T-cell (primary cell): ENCODE measurements at regions of chr5 and their contacts with region 1.

Region 1: GRCh38 chr5:154466671-154467070 is 11.4 kb downstream of the HAND1 start:
- DNase-seq: no peak
- ATAC-seq: no peak
- H3K4me3 ChIP-seq: no peak overlapping the region
- H3K4me3 Mint-ChIP-seq: no peak overlapping the region
- H3K27ac ChIP-seq: no peak overlapping the region
- H3K27ac Mint-ChIP-seq: no peak overlapping the region
- H3K4me1 ChIP-seq: no peaks in the 10 kb centered on the region
- H3K4me1 Mint-ChIP-seq: peaks cover 4 to 7% (median 5%) of the 10 kb centered on the region in 3 donors
- H3K27me3 ChIP-seq: peaks cover 9 to 29% of the 10 kb centered on the region in 2 experiments
- H3K27me3 Mint-ChIP-seq: peaks cover 28 to 31% of the 10 kb centered on the region in 2 donors

Region 2: DNA sequence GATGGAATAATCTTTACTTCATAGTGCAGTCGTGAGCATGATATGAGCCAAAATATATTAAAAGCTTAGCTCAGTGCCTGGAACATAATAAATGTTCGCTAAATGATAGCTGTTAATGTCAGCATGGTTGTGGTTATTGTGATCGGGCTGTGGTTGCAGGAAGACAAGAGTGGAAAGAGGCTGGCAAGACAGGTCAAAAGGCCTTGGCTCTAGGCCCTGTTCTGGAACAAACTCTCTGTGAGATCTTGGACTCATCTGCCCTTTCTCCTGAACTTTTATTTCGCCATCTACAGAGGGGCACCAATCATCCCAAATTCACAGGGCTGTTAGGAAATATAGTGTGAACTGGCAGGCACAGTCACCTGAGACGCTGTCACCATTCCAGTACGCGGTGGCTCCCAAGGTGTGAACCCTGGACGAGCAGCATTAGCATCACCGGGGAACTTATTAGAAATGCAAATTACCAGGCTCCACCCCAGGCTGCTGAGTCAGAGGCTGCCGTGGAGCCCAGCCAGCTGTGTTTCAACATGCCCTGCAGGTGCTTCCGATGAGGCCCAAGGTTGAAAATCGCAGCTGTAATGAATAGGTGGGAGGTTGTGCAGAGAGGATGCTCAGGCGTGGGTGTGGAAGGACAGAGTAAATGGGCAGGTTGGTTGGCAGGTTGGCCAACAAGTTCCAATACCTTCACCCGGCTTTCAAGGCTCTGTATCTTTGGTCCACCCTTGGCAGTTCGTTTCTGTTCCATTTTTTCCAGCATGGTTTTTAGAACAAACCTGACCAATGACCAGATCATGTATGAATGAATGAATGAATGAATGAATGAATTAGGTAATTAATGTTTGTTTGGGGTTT is 71.0 kb before region 1 on chr5:
- CTCF ChIA-PET with region 1: no interaction called
- POLR2A ChIA-PET with region 1: no interaction called
- DNase-seq: no peak
- ATAC-seq: no peak
- H3K4me3 ChIP-seq: no peak overlapping the region
- H3K4me3 Mint-ChIP-seq: no peak overlapping the region
- H3K27ac ChIP-seq: no peak overlapping the region
- H3K27ac Mint-ChIP-seq: no peak overlapping the region
- H3K4me1 ChIP-seq: no peaks in the 10 kb centered on the region
- H3K4me1 Mint-ChIP-seq: no peaks in the 10 kb centered on the region
- H3K27me3 ChIP-seq: no peaks in the 10 kb centered on the region
- H3K27me3 Mint-ChIP-seq: no peaks in the 10 kb centered on the region

Region 3: DNA sequence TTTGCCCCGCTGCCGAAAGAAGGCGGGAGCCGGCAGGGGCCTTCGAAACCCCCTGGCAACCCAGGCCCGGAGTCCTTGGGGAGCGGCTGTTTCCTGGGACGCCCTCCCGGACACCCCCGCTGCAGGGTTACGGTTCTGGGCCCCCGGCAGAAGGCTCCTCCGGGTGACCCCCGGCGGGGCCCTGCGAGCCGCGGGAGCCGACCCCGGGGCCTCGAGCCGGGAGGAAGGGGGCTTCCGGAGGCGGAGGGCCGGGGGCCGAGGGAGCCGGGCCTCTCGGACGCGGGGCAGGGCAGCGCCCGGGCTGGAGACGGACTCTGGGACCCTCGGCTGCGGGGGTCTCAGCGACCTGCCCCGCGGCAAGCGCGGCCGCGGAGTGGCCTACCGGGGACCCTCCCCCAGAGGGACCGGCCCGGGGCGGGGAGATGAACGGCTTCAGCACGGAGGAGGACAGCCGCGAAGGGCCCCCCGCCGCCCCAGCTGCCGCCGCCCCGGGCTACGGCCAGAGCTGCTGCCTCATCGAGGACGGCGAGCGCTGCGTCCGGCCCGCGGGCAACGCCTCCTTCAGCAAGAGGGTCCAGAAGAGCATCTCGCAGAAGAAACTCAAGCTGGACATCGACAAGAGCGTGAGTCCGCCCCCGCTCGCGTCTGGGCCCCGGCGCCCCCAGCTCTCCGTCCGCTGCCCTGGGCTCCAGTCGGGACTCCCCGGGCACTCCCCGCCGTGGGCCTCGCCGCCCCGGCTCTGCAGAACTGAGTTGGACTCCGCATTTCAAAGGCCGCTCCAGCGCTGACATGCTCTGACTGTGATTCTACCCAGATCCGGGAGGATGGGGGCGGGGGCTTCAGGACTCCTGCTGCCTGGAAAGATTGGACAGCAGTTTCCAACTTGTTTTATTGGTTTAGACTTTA is 20.2 kb before region 1 on chr5:
- CTCF ChIA-PET with region 1: interaction called, 7 to 10 read pairs
- POLR2A ChIA-PET with region 1: interaction called in 1 of 2 experiments, 3 read pairs
- DNase-seq: peak in 27 of 35 experiments; percentile 2 to 56 (median 23)
- ATAC-seq: peak; percentile 15 to 27 (median 16)
- H3K4me3 ChIP-seq: peak overlapping the region; percentile 65 to 95
- H3K4me3 Mint-ChIP-seq: peak overlapping the region; percentile 90 to 99 (median 90)
- H3K27ac ChIP-seq: peak overlapping the region; percentile 43
- H3K27ac Mint-ChIP-seq: peak overlapping the region; percentile 82 to 86
- H3K4me1 ChIP-seq: peaks cover 22 to 34% of the 10 kb centered on the region in 2 experiments
- H3K4me1 Mint-ChIP-seq: peaks cover 61 to 67% (median 66%) of the 10 kb centered on the region in 3 donors
- H3K27me3 ChIP-seq: no peaks in the 10 kb centered on the region
- H3K27me3 Mint-ChIP-seq: no peaks in the 10 kb centered on the region